ENCODE measurements at regions of chr20 and their contacts with region 1.

Region 1: GRCh38 chr20:35447082-35447789 is 8.2 kb upstream of the CEP250 start:
- DNase-seq: peak; percentile 95
- ATAC-seq: peak; percentile 98
- H3K4me3 Mint-ChIP-seq: peak overlapping the region; percentile 76
- H3K27ac Mint-ChIP-seq: peak overlapping the region; percentile 37
- H3K4me1 Mint-ChIP-seq: peaks cover 7% of the 10 kb centered on the region
- H3K27me3 Mint-ChIP-seq: no peaks in the 10 kb centered on the region

Region 2: DNA sequence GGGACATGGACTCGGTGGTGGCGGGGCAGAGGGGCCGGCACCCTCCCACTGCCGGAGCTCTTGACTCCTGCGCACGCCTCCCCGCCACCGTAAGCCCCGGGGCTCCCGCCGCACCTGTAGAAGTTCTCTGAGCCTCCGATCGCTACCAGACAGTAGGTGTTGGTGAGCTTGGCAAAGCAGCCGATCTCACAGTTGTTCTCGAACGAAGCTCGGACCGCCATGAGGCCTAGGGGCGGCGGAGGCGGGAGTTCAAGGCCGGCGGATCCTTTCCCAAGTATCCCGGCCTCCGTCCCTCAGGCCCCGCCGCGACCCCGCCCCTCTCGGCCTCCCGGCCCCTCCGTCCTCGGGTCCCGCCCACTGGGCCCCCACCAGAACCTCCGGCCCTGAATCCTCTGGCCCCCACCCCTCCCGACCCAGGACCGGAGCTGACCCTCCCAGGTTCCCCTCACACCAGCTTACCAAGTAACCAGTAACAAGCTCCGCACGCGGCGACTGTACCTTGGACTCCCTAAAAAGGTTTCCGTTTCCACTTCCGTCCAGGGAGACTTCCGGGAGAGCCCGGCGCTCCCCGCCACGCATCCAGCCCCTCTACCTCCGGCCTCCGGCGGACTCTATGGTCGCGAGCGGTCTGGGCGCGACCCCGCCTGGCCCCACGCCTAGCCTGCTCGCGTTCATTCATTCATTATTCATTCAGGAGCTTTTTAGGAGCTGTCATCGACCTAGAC is 162.8 kb before region 1 on chr20 and contains the start of gene EIF6:
- CTCF ChIA-PET with region 1: interaction called, 19 read pairs
- DNase-seq: peak; percentile 87
- ATAC-seq: peak; percentile 89
- H3K4me3 Mint-ChIP-seq: peak within 1 kb of the TSS; percentile 84
- H3K27ac Mint-ChIP-seq: peak within 1 kb of the TSS; percentile 90
- H3K4me1 Mint-ChIP-seq: peaks cover 30% of the 10 kb centered on the region
- H3K27me3 Mint-ChIP-seq: no peaks in the 10 kb centered on the region
- total RNA-seq, gene EIF6: 98.6 to 121 TPM

Region 3: DNA sequence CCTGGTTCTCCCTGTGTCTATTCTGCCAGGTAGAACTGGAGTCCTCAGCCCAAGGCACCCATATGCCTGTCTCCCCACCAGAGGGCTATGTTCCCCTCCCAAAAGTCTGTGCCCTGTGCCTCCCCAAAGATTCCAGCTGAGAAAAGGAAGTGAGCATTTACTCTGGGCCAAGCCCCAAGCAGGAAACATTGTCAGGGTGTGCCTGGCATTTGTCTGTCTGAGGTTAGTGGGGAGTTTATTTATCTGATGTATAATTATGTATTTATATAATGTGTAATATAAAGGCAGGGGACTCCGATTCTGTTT is 14.9 kb before region 1 on chr20:
- CTCF ChIA-PET with region 1: interaction called, 18 read pairs
- DNase-seq: no peak
- ATAC-seq: no peak
- H3K4me3 Mint-ChIP-seq: no peak overlapping the region
- H3K27ac Mint-ChIP-seq: no peak overlapping the region
- H3K4me1 Mint-ChIP-seq: no peaks in the 10 kb centered on the region
- H3K27me3 Mint-ChIP-seq: no peaks in the 10 kb centered on the region